PC-3 (cell line): ENCODE measurements at regions of chr18 and their contacts with region 1.

Region 1: DNA sequence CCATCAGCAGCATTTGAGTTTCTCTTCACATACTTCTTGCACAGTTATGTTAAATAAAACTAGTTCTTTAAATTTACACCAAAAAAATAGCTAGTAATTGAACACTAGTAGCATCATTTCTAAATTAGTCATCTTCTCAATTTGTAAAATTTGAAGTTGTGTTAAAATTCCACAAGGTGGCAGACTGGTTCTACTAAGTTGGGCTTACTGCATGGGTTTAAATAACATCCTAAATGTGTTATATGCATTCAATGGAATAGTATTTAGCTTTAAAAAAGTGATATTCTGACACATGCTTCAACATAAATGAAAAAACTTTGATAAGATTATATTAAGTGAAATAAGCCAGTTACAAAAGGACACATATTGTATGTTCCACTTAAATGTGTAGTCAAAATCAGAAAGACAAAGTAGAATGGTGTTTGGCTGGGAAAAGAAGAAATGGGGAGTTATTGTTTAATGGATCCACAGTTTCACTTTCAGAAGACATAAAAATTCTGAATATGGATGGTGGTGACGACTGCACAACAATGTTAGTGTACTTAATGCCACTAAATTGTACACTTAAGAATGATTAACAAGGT is 28.7 kb upstream of the RPRD1A start:
- DNase-seq: peak; percentile 48
- ATAC-seq: no peak
- H3K4me3 ChIP-seq: no peak overlapping the region
- H3K27ac ChIP-seq: no peak overlapping the region
- H3K4me1 ChIP-seq: no peaks in the 10 kb centered on the region
- H3K27me3 ChIP-seq: no peaks in the 10 kb centered on the region
- CTCF ChIP-seq: peak; percentile 56

Region 2: GRCh38 chr18:35736696-35737095 is 359.3 kb before region 1 on chr18:
- CTCF ChIA-PET with region 1: no interaction called
- POLR2A ChIA-PET with region 1: no interaction called
- intact Hi-C with region 1: no loop called
- DNase-seq: no peak
- ATAC-seq: no peak
- H3K4me3 ChIP-seq: no peak overlapping the region
- H3K27ac ChIP-seq: no peak overlapping the region
- H3K4me1 ChIP-seq: no peaks in the 10 kb centered on the region
- H3K27me3 ChIP-seq: no peaks in the 10 kb centered on the region
- CTCF ChIP-seq: no peak

Region 3: DNA sequence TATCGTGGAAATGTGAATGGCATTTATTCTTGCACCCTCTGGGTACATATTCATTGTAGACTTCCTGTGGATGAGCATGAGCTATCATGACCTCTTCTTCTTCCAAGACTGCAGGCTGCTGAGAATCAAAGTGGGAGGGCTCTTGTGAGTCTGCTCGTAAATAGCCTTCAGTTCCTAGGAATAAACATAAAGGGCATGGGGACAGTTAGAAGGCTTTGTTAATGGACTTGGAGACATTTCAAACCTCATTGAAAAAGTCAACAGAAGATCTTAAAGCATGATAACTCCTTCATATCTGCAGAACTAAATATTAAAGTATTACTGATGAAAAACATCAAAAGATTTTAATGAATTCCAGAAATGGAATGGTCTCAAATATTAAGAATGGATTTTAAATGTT is 18.3 kb after region 1 on chr18:
- CTCF ChIA-PET with region 1: no interaction called
- POLR2A ChIA-PET with region 1: no interaction called
- intact Hi-C with region 1: no loop called
- DNase-seq: no peak
- ATAC-seq: no peak
- H3K4me3 ChIP-seq: no peak overlapping the region
- H3K27ac ChIP-seq: no peak overlapping the region
- H3K4me1 ChIP-seq: peaks cover 5% of the 10 kb centered on the region
- H3K27me3 ChIP-seq: no peaks in the 10 kb centered on the region
- CTCF ChIP-seq: no peak

Region 4: GRCh38 chr18:36129300-36130038 is 33.4 kb after region 1 on chr18 and contains the starts of genes ELP2 and SLC39A6:
- CTCF ChIA-PET with region 1: interaction called, 11 read pairs
- POLR2A ChIA-PET with region 1: no interaction called
- intact Hi-C with region 1: loop called (anchors 2 kb)
- DNase-seq: peak; percentile 79
- ATAC-seq: peak; percentile 87
- H3K4me3 ChIP-seq: peak within 1 kb of the TSS; percentile 87
- H3K27ac ChIP-seq: peak within 1 kb of the TSS; percentile 86
- H3K4me1 ChIP-seq: 0 out of 2 replicates have a peak, but pooled peaks cover 3% of the 10 kb centered on the region
- H3K27me3 ChIP-seq: no peaks in the 10 kb centered on the region
- CTCF ChIP-seq: no peak
- total RNA-seq, gene ELP2: 24.6 and 47.3 TPM in 2 replicates
- total RNA-seq, gene SLC39A6: 18.3 and 25.5 TPM in 2 replicates

Region 5: GRCh38 chr18:36284671-36285295 is 188.8 kb after region 1 on chr18:
- CTCF ChIA-PET with region 1: interaction called, 14 read pairs
- POLR2A ChIA-PET with region 1: no interaction called
- intact Hi-C with region 1: loop called (anchors 1 kb)
- DNase-seq: peak; percentile 55
- ATAC-seq: peak; percentile 27; the same call in 1 of the 2 replicates
- H3K4me3 ChIP-seq: no peak overlapping the region
- H3K27ac ChIP-seq: no peak overlapping the region
- H3K4me1 ChIP-seq: no peaks in the 10 kb centered on the region
- H3K27me3 ChIP-seq: no peaks in the 10 kb centered on the region
- CTCF ChIP-seq: peak; percentile 74

Region 6: DNA sequence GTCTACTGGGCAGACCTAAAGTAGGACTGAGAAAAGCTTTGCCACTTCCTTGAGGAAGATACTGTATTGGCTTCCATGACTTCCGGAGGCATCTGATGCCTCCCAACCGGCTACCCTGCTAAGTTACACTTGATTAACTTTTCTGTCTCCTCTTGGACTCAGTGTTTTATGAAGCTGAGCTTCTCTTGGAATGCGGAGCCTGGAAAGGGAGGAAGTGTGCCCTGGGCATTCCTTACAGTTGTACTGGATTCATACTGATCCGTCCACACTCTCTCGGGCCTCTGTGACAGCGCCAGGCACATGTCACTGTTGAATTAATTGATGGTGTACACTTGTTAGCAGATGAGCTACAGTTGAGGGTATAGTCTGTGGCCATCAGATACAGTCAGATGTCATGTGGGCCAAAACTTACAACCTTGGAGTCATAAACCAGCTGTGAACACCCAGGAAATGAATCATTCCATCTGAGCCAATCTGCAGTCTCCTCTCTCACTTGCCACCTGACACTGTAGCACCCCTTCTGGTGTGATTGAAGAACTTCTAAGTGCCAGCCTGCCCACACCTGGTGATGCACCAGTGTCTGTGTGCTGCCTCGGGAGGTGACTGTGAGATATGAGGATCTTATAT is 324.0 kb after region 1 on chr18:
- CTCF ChIA-PET with region 1: no interaction called
- POLR2A ChIA-PET with region 1: no interaction called
- intact Hi-C with region 1: loop called (anchors 10 kb)
- DNase-seq: peak; percentile 51
- ATAC-seq: peak; percentile 84
- H3K4me3 ChIP-seq: no peak overlapping the region
- H3K27ac ChIP-seq: no peak overlapping the region
- H3K4me1 ChIP-seq: peaks cover 14% of the 10 kb centered on the region
- H3K27me3 ChIP-seq: no peaks in the 10 kb centered on the region
- CTCF ChIP-seq: peak; percentile 40

Region 7: GRCh38 chr18:36757081-36757480 is 661.1 kb after region 1 on chr18:
- CTCF ChIA-PET with region 1: no interaction called
- POLR2A ChIA-PET with region 1: no interaction called
- intact Hi-C with region 1: loop called (anchors 1 kb)
- DNase-seq: peak; percentile 53
- ATAC-seq: peak; percentile 56
- H3K4me3 ChIP-seq: no peak overlapping the region
- H3K27ac ChIP-seq: no peak overlapping the region
- H3K4me1 ChIP-seq: no peaks in the 10 kb centered on the region
- H3K27me3 ChIP-seq: no peaks in the 10 kb centered on the region
- CTCF ChIP-seq: peak; percentile 57